K562 (cell line): ENCODE measurements at regions of chr16 and their contacts with region 1.

Region 1: DNA sequence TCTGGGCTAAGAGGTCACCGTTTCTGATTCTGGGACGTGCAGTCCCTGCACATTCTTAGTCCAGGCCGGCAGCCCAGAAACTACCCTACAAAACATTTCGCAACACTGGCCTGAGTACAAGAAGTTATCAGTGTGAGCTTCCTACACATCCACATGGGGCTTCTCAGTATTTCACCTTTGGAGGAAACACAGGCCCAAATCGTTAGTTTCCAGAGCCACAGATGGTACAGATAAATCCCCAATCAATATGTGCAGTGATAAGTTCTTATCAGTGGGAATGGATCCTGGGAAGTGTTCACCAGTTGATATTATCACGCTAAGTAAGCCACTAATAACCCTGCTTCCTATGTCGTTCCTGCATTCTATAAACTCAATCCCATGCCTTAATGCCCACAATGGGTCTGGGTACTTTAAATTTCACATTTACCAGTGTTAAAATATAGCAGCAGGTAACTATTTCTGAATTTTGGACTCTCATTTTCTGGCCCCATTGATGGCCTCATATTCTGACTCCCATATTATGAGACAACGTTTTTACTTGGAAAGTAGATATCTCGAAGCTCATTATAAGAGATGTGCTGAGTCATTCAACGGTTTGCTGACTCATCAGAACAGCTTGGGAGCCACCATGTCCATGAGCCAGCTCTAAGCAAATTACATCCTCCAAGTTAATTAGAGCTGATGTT is 370.2 kb upstream of the MAF start:
- DNase-seq: peak; percentile 63 to 96 (median 66)
- ATAC-seq: peak; percentile 85
- H3K4me3 ChIP-seq: no peak overlapping the region
- H3K27ac ChIP-seq: peak overlapping the region; percentile 97
- H3K4me1 ChIP-seq: peaks cover 9 to 50% of the 10 kb centered on the region in 2 experiments; a peak in 4 of 5 replicates
- H3K27me3 ChIP-seq: no peaks in the 10 kb centered on the region
- CTCF ChIP-seq: peak in 1 of 3 experiments; percentile 13; a peak in 2 of 6 replicates
- EP300 ChIP-seq: peak; percentile 92
- POLR2A ChIP-seq: no peak
- RAD21 ChIP-seq: peak; percentile 42 to 53

Region 2: GRCh38 chr16:79770244-79771064 is 200.2 kb before region 1 on chr16:
- CTCF ChIA-PET with region 1: no interaction called
- POLR2A ChIA-PET with region 1: interaction called, 3 read pairs
- in situ Hi-C with region 1: no loop called
- intact Hi-C with region 1: loop called (anchors 5 kb)
- DNase-seq: peak; percentile 95 to 99 (median 98)
- ATAC-seq: peak; percentile 99
- H3K4me3 ChIP-seq: peak overlapping the region; percentile 48
- H3K27ac ChIP-seq: peak overlapping the region; percentile 87
- H3K4me1 ChIP-seq: peaks cover 11 to 36% of the 10 kb centered on the region in 2 experiments
- H3K27me3 ChIP-seq: no peaks in the 10 kb centered on the region
- CTCF ChIP-seq: no peak; a peak in 1 of 6 replicates
- EP300 ChIP-seq: no peak
- POLR2A ChIP-seq: peak; percentile 72
- RAD21 ChIP-seq: no peak

Region 3: DNA sequence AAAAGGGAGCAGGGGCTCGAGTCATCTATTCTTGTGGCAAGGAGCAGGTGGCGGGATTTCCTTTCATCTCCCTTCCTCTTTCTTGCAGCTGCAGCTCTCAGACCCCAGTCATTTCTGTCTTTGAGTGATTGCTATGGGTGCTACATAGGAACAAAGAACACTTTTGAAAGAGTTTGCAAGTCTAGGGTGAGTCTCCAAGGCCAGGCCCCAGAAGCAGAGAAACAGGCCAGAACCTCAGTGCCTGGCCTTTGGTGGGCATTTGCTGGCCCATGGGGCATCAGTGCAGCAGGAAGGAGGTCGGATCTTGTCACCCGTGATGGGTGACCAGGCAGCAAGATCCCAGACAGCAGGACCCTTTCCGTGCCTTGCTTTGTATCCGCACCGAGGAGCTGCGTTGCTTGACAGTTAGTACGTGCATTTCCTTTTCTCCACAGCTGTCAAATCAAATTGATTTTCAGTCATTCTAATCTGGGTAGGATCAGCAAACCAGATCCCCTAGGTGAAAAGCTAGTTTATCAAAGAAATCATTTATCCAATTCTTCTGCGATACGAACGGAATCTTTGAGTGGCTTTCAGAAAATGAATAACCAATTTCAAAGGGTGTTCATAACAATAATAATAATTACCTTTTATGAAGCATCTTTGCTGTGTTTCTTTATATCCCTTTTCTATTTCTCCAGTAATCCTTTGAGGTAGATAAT is 125.5 kb before region 1 on chr16:
- CTCF ChIA-PET with region 1: no interaction called
- POLR2A ChIA-PET with region 1: interaction called, 4 read pairs
- in situ Hi-C with region 1: no loop called
- intact Hi-C with region 1: loop called (anchors 5 kb)
- DNase-seq: no peak
- ATAC-seq: peak; percentile 10; the same call in 2 of the 3 replicates
- H3K4me3 ChIP-seq: peak overlapping the region; percentile 39
- H3K27ac ChIP-seq: peak overlapping the region; percentile 75
- H3K4me1 ChIP-seq: peaks cover 16 to 37% of the 10 kb centered on the region in 2 experiments; a peak in 4 of 5 replicates
- H3K27me3 ChIP-seq: no peaks in the 10 kb centered on the region
- CTCF ChIP-seq: no peak
- EP300 ChIP-seq: no peak
- POLR2A ChIP-seq: no peak
- RAD21 ChIP-seq: no peak; a peak in 1 of 4 replicates

Region 4: GRCh38 chr16:79869304-79870015 is 101.2 kb before region 1 on chr16:
- CTCF ChIA-PET with region 1: no interaction called
- POLR2A ChIA-PET with region 1: no interaction called
- in situ Hi-C with region 1: no loop called
- intact Hi-C with region 1: loop called (anchors 5 kb)
- DNase-seq: peak in 2 of 4 experiments; percentile 71 to 82
- ATAC-seq: peak; percentile 89
- H3K4me3 ChIP-seq: peak overlapping the region; percentile 0; the same call in 1 of the 2 replicates
- H3K27ac ChIP-seq: peak overlapping the region; percentile 83
- H3K4me1 ChIP-seq: peaks cover 17 to 62% of the 10 kb centered on the region in 2 experiments
- H3K27me3 ChIP-seq: no peaks in the 10 kb centered on the region
- CTCF ChIP-seq: no peak
- EP300 ChIP-seq: peak; percentile 99
- POLR2A ChIP-seq: no peak
- RAD21 ChIP-seq: peak; percentile 26 to 43; a peak in 3 of 4 replicates

Region 5: DNA sequence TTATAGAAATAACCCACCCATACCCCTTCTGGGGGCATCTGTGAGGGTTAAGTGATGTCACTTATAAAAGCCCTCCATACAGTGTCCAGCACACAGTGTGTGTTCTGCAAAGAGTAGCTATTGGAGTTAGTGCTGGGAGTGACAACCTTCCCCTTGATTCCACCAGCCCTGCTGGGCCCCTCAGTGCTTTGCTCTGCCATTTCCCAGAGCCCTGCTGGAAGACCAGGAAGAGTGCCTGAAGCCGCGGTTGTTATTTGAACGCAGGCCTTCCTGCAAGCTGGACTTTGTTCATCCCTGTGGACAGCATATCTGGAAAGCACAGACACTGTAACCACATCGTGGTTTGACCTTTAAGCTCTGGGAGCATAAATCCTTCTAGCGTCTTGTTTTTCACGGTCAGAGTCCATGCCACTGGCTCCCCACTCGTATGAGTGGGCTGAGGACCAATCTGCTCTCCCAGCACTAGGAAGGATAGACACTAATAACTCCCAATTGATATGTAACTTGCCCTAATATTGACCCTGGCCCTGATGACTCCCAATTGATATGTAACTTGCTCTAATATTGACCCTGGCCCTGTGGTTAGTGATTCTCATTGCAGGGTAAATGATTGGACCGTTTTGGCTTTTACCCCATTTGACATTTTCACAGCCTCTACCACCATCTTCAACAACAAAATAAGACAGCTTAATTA is 73.1 kb before region 1 on chr16:
- CTCF ChIA-PET with region 1: no interaction called
- POLR2A ChIA-PET with region 1: interaction called, 3 read pairs
- in situ Hi-C with region 1: no loop called
- intact Hi-C with region 1: loop called (anchors 5 kb)
- DNase-seq: peak in 2 of 4 experiments; percentile 44 to 74
- ATAC-seq: peak; percentile 80
- H3K4me3 ChIP-seq: no peak overlapping the region
- H3K27ac ChIP-seq: peak overlapping the region; percentile 16; the same call in 1 of the 3 replicates
- H3K4me1 ChIP-seq: peaks cover 0 to 16% of the 10 kb centered on the region in 2 experiments; a peak in 4 of 5 replicates
- H3K27me3 ChIP-seq: no peaks in the 10 kb centered on the region
- CTCF ChIP-seq: no peak
- EP300 ChIP-seq: peak; percentile 68; the same call in 1 of the 2 replicates
- POLR2A ChIP-seq: no peak
- RAD21 ChIP-seq: peak; percentile 26 to 34; a peak in 2 of 4 replicates

Region 6: DNA sequence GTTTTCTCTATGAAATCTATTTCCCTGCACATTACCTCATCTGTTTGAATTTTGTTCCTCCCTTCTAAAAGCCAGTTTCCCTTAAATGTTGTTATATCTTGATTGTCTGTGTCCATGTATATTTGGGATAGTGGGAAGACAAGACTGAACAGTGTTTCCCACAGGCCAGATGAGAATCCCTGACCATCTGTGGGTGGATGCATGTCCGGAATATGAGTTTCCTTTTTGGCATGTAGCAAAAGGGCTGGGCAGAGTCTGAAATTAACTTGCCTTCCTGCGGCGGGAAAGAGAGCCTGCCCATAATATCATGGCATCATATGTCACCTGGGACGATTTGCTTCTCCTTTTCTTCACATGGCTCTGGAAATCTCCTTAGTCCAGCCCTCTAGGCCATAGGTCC is 15.7 kb after region 1 on chr16:
- CTCF ChIA-PET with region 1: no interaction called
- POLR2A ChIA-PET with region 1: interaction called, 20 read pairs
- in situ Hi-C with region 1: no loop called
- intact Hi-C with region 1: no loop called
- DNase-seq: no peak
- ATAC-seq: no peak
- H3K4me3 ChIP-seq: no peak overlapping the region
- H3K27ac ChIP-seq: no peak overlapping the region
- H3K4me1 ChIP-seq: peaks cover 0 to 21% of the 10 kb centered on the region in 2 experiments; a peak in 3 of 5 replicates
- H3K27me3 ChIP-seq: no peaks in the 10 kb centered on the region
- CTCF ChIP-seq: no peak
- EP300 ChIP-seq: no peak
- POLR2A ChIP-seq: no peak
- RAD21 ChIP-seq: no peak